ENCODE measurements at regions of chr1 and their contacts with region 1.

Region 1: GRCh38 chr1:168483539-168483938 is 60.3 kb downstream of the XCL2 start:
- DNase-seq: no peak
- H3K4me3 Mint-ChIP-seq: no peak overlapping the region
- H3K27ac Mint-ChIP-seq: no peak overlapping the region
- H3K4me1 Mint-ChIP-seq: peaks cover 30% of the 10 kb centered on the region
- H3K27me3 Mint-ChIP-seq: no peaks in the 10 kb centered on the region

Region 2: DNA sequence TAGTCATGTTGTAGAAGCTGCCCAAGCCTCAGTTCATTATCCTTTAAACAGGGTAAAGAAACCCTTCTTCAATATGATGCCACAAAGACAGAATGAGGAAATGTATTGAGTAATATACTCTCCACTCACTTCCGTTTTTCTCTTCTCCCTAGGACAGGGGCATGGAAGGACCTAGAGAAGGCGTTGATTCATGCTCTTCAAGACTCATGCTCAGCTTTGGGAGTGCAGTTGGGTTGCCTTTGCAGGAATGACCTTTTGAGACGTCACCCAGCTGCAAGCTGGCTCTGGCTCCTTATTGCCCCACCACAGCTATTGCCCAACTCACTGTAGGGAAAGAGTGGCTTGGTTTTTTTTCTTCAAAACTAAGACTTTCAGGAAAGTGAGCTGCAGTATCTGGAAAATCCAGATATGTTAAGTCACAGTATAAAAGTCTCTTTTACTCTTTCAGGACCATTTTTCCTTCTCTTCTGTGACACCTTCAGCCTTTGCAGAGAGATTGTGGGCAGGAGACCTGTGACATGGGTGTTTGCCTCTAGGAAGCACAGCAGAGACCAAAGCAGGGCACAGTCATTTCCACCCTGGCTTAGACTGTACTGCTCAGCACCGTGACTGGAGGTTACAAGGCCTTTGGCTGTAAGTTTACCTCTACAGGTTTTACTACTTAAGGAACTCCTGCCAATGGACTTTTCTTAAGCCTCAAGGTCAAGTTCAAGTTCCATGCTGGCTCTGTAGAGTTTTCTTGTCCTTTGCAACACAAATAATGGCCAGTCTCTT is 20.7 kb after region 1 on chr1:
- CTCF ChIA-PET with region 1: no interaction called
- intact Hi-C with region 1: loop called (anchors 2 kb)
- DNase-seq: peak; percentile 56
- H3K4me3 Mint-ChIP-seq: no peak overlapping the region
- H3K27ac Mint-ChIP-seq: no peak overlapping the region
- H3K4me1 Mint-ChIP-seq: peaks cover 26% of the 10 kb centered on the region
- H3K27me3 Mint-ChIP-seq: no peaks in the 10 kb centered on the region

Measured in activated naive CD4-positive, alpha-beta T cell treated with anti-CD3 and anti-CD28 coated beads for 36 hours (primary cell).